MCF 10A (cell line): ENCODE measurements at regions of chr2 and their contacts with region 1.

Region 1: GRCh38 chr2:76599732-76600368 is 889.1 kb upstream of the GCFC2 start:
- DNase-seq: peak; percentile 86
- H3K4me3 Mint-ChIP-seq: no peak overlapping the region
- H3K27ac Mint-ChIP-seq: no peak overlapping the region
- H3K4me1 Mint-ChIP-seq: no peaks in the 10 kb centered on the region
- H3K27me3 Mint-ChIP-seq: peaks cover 12% of the 10 kb centered on the region
- CTCF ChIP-seq: peak; percentile 80

Region 2: DNA sequence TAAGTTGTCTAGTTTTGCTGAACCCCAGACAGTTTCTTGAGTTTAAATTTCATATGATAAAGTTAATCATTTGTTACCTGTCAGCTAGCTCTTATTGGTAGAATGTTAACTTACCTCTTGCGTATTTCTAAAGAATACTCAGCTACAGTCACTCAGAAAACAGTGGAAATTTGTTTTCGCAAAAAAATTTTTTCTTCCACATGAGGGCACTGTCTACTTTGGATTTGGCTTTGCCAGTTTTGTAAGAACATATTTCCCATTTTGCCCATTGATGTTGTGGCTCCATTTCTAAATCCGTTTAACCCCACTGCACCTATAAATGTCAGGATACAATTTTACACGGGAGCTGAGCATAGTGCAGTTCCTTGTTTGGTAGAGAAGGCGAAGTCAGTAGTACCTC is 870.0 kb before region 1 on chr2:
- CTCF ChIA-PET with region 1: interaction called, 26 read pairs
- POLR2A ChIA-PET with region 1: no interaction called
- intact Hi-C with region 1: loop called (anchors 1 kb)
- DNase-seq: peak; percentile 22
- H3K4me3 Mint-ChIP-seq: no peak overlapping the region
- H3K27ac Mint-ChIP-seq: no peak overlapping the region
- H3K4me1 Mint-ChIP-seq: no peaks in the 10 kb centered on the region
- H3K27me3 Mint-ChIP-seq: peaks cover 23% of the 10 kb centered on the region
- CTCF ChIP-seq: peak; percentile 29

Region 3: DNA sequence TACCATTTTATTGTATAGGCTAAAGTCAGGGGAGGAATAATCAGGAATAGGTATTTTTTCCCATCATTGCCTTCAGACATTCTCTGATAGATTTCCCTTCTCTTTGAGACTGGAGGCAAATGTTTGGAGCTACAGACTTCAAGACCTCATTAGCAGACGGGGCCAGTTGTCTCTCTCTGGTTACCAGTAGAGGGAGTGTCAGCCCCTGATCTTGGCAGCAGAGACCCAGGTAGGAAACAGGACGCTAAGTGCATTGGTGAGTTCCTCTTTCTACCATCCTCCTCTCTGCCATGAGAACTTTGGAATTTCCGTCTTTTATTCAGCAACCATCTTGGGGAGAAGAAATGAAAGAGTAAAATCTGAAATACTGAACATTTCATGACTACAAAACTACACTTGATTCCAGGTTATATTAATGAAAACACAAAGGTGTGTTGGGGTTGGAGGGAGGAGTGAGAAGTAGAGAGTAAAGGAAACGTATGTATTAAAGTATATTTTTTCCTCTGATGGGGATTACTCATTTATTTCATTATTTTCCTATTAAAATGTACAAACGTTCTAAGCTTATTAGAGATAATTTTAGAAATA is 703.0 kb before region 1 on chr2:
- CTCF ChIA-PET with region 1: interaction called, 4 read pairs
- POLR2A ChIA-PET with region 1: no interaction called
- intact Hi-C with region 1: loop called (anchors 5 kb)
- DNase-seq: peak; percentile 72
- H3K4me3 Mint-ChIP-seq: no peak overlapping the region
- H3K27ac Mint-ChIP-seq: no peak overlapping the region
- H3K4me1 Mint-ChIP-seq: no peaks in the 10 kb centered on the region
- H3K27me3 Mint-ChIP-seq: no peaks in the 10 kb centered on the region
- CTCF ChIP-seq: peak; percentile 56

Region 4: DNA sequence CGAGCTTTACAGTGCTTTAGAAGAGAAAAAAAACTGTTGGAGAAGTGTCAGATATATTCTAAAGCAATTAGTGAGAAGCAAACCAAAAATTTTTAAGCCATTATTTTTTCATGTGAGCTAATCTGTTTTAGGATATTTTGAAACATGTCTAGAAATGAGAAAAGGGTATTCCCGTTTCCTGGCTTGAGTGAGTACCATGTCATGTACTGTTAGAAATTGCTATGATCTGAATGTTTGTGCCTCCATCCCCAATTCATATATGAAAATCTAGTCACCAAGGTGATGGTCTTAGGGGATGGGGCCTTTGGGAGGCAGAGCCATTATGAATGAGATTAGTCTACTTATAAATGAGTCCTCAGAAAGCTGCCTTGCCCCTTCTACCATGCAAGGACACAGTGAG is 395.8 kb before region 1 on chr2:
- CTCF ChIA-PET with region 1: interaction called, 15 read pairs
- POLR2A ChIA-PET with region 1: no interaction called
- intact Hi-C with region 1: no loop called
- DNase-seq: no peak
- H3K4me3 Mint-ChIP-seq: no peak overlapping the region
- H3K27ac Mint-ChIP-seq: no peak overlapping the region
- H3K4me1 Mint-ChIP-seq: no peaks in the 10 kb centered on the region
- H3K27me3 Mint-ChIP-seq: no peaks in the 10 kb centered on the region
- CTCF ChIP-seq: no peak

Region 5: DNA sequence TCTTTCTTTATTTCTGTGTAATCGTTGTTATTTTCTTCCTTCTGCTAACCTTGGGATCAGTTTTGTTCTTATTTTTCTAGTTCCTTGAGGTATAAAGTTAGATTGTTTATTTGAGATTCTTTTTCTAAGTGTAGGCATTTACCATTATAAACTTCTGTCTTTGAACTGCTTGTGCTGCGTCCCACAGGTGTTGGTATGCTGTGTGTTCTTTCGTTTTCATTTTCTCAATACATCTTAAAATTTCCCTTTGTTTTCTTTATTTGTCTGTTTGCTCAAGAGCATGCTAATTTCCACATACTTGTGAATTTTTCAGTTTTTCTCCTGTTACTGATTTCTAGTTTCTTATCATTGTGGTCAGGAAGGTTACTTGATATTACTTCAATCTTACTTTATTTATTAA is 15.4 kb before region 1 on chr2:
- CTCF ChIA-PET with region 1: interaction called, 10 read pairs
- POLR2A ChIA-PET with region 1: no interaction called
- intact Hi-C with region 1: no loop called
- DNase-seq: no peak
- H3K4me3 Mint-ChIP-seq: no peak overlapping the region
- H3K27ac Mint-ChIP-seq: no peak overlapping the region
- H3K4me1 Mint-ChIP-seq: no peaks in the 10 kb centered on the region
- H3K27me3 Mint-ChIP-seq: no peaks in the 10 kb centered on the region
- CTCF ChIP-seq: no peak